ENCODE measurements at regions of chr7 and their contacts with region 1.

Region 1: DNA sequence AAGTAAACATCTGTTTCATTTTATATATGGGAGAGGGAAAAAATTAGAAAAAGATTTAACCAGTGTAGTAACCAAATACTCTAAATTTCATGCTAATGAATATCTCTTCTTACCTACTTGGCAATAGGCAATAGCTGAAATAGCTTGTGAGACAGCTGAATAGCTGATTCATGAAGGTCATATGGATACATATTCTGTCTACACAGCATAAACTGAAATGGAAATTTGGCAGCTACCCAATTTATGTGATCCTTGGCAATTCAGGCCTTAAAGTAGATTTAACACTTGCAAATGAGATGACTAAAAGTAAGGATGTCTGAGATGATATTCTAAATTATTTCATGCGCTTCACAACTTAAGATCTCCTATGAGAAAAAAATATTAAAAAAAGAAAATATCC is 261.2 kb upstream of the SEMA3A start:
- DNase-seq: peak; percentile 31
- H3K4me3 ChIP-seq: no peak overlapping the region
- H3K27ac ChIP-seq: no peak overlapping the region
- H3K4me1 ChIP-seq: peaks cover 12% of the 10 kb centered on the region
- H3K27me3 ChIP-seq: no peaks in the 10 kb centered on the region

Region 2: GRCh38 chr7:83957333-83957732 is 498.5 kb before region 1 on chr7:
- in situ Hi-C with region 1: loop called (anchors 25 kb)
- DNase-seq: no peak
- H3K4me3 ChIP-seq: no peak overlapping the region
- H3K27ac ChIP-seq: no peak overlapping the region
- H3K4me1 ChIP-seq: no peaks in the 10 kb centered on the region
- H3K27me3 ChIP-seq: no peaks in the 10 kb centered on the region

Region 3: DNA sequence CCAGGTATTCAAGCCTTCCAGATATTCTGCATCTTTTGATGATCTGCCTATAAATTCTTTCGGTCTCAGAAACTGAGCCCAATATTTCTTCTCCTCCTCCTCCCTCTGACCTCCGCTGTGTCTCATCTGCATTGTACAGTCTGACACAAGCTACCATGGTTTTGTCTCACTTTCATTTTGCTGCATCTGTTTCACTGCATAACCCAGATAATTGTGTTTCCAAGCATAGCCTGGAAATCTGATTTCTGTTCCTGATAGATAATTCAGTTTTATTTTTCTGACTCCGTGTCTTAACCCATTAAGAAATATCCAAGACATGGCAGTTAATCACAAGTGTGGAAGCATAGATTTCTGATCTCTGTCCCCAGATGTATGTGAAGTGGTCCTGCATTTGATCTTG is 113.0 kb after region 1 on chr7:
- in situ Hi-C with region 1: no loop called
- DNase-seq: peak; percentile 9
- H3K4me3 ChIP-seq: peak overlapping the region; percentile 17; the same call in 1 of the 2 replicates
- H3K27ac ChIP-seq: no peak overlapping the region
- H3K4me1 ChIP-seq: no peaks in the 10 kb centered on the region
- H3K27me3 ChIP-seq: no peaks in the 10 kb centered on the region

Measured in GM23248 (cell line).